Activated naive CD4-positive, alpha-beta T cell treated with anti-CD3 and anti-CD28 coated beads for 36 hours (primary cell): ENCODE measurements at regions of chr1 and their contacts with region 1.

Region 1: GRCh38 chr1:62407405-62408009 is 29.3 kb upstream of the USP1 start:
- DNase-seq: no peak
- H3K4me3 Mint-ChIP-seq: no peak overlapping the region
- H3K27ac Mint-ChIP-seq: no peak overlapping the region
- H3K4me1 Mint-ChIP-seq: no peaks in the 10 kb centered on the region
- H3K27me3 Mint-ChIP-seq: no peaks in the 10 kb centered on the region

Region 2: GRCh38 chr1:62082456-62083363 is 324.8 kb before region 1 on chr1:
- CTCF ChIA-PET with region 1: interaction called, 4 read pairs
- intact Hi-C with region 1: loop called (anchors 1 kb)
- DNase-seq: peak; percentile 62
- H3K4me3 Mint-ChIP-seq: no peak overlapping the region
- H3K27ac Mint-ChIP-seq: no peak overlapping the region
- H3K4me1 Mint-ChIP-seq: no peaks in the 10 kb centered on the region
- H3K27me3 Mint-ChIP-seq: no peaks in the 10 kb centered on the region

Region 3: DNA sequence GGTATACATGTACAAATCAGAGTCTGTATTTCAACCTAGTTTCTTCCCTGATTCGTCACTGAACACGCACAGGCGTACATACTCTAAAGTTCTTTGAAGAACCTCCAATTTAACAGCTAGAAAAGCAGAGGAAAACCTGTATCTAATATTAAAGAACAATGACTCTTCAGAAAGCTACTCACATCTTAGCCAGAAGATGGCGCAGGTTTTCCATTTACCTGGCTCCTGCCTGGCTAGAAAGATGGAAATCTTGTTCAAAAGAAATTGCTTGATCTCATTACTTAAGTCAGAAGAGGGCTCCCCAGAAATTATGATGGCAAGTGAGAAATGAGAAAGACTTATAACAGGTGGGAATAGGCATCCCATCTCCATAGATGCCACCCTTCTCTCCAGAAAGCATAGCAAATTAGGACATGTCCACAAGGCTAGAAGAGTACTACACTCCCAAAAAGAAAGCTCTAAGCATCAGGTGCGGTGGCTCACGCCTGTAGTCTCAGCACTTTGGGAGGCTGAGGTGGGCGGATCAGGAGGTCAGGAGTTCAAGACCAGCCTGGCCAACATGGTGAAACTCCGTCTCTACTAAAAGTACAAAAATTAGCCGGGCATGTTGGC is 231.8 kb before region 1 on chr1:
- CTCF ChIA-PET with region 1: interaction called, 75 read pairs
- intact Hi-C with region 1: loop called (anchors 1 kb)
- DNase-seq: peak; percentile 62
- H3K4me3 Mint-ChIP-seq: no peak overlapping the region
- H3K27ac Mint-ChIP-seq: no peak overlapping the region
- H3K4me1 Mint-ChIP-seq: no peaks in the 10 kb centered on the region
- H3K27me3 Mint-ChIP-seq: peaks cover 3% of the 10 kb centered on the region

Region 4: DNA sequence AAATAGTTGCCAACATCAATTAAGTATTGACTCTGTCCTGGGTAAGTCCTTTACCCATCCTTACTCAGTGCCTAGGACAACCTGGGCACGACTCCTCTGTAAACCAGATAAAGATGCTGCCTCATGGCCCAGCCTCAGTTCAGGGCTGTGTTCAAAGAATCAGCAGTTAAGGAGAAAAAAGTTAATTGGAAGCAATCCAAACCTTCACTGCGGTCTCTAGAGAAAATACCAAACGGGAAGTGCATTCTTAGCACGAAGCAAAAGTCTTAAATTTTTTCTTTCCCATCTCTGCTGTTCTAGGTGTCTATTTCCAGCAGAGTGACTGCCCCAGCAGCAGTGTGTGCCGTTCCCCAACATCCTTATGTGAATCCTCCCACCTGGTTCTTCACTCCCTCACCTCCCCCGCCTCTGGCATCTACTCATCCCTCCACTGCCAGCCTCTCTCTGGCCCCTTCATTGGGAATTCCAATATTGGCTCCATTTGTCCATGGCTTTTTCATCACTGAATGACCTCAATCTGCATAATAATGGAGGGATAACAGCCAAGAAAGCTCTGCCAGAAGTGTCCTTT is 111.5 kb before region 1 on chr1:
- CTCF ChIA-PET with region 1: interaction called, 3 read pairs
- intact Hi-C with region 1: loop called (anchors 5 kb)
- DNase-seq: peak; percentile 14
- H3K4me3 Mint-ChIP-seq: no peak overlapping the region
- H3K27ac Mint-ChIP-seq: no peak overlapping the region
- H3K4me1 Mint-ChIP-seq: peaks cover 12% of the 10 kb centered on the region
- H3K27me3 Mint-ChIP-seq: no peaks in the 10 kb centered on the region

Region 5: DNA sequence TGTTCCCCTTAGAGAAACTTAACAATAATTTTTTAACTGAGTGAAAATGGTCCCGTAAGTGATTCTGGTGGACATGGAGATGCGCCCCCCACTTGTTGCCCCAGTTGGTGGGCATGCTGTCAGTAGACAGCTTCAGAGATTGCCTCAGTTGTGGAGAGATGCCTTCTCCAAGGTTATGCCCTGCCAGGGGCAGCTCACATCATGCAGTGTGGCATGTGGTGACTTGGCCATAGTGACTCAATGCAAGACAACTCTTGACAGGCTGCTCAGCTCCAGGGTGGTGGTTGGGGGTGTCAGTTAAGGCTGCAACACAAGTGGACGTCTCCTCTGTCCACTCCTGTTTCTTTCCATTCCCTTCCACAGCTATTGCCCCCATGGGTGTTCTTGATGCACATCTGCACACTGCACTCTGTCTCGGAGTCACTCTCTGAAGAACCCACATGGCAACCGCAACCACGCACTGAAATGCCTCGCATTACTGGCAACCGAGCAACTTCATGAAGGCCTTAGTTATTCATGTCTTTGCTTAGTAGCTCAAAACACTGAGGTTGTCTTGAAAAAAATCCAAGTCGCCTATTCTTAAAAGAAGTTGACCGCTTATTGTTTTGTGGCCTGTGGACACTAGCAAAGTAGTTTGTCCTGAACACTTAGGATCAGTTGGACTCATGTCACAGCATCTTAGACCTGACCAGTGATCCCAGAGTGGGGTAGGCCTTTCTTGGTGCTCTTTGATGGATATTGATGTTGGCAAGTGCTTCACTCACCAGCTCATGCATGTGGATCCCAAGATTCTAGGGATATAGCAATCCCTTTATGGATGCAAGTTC is 25.5 kb before region 1 on chr1:
- CTCF ChIA-PET with region 1: no interaction called
- intact Hi-C with region 1: no loop called
- DNase-seq: no peak
- H3K4me3 Mint-ChIP-seq: no peak overlapping the region
- H3K27ac Mint-ChIP-seq: no peak overlapping the region
- H3K4me1 Mint-ChIP-seq: no peaks in the 10 kb centered on the region
- H3K27me3 Mint-ChIP-seq: no peaks in the 10 kb centered on the region

Region 6: DNA sequence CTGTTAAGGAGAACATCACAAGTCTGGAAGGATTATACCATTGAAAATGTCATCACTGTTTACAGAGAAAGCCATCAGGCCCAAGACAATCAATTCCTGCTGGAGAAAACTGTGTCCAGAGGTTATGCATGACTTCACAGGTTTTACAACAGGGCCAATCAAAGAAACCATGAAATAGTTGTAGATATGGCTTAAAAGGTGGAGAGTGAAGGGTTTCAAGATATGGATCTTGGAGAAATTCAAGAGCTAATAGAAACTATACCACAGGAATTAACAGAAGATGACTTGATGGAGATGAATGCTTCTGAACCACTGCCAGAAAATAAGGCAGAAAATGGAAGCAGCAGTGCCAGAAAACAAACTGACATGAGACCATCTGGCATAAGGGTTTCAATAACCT is 59.6 kb after region 1 on chr1:
- CTCF ChIA-PET with region 1: no interaction called
- intact Hi-C with region 1: no loop called
- DNase-seq: no peak
- H3K4me3 Mint-ChIP-seq: no peak overlapping the region
- H3K27ac Mint-ChIP-seq: no peak overlapping the region
- H3K4me1 Mint-ChIP-seq: no peaks in the 10 kb centered on the region
- H3K27me3 Mint-ChIP-seq: no peaks in the 10 kb centered on the region